ENCODE measurements at regions of chr1 and their contacts with region 1.

Region 1: DNA sequence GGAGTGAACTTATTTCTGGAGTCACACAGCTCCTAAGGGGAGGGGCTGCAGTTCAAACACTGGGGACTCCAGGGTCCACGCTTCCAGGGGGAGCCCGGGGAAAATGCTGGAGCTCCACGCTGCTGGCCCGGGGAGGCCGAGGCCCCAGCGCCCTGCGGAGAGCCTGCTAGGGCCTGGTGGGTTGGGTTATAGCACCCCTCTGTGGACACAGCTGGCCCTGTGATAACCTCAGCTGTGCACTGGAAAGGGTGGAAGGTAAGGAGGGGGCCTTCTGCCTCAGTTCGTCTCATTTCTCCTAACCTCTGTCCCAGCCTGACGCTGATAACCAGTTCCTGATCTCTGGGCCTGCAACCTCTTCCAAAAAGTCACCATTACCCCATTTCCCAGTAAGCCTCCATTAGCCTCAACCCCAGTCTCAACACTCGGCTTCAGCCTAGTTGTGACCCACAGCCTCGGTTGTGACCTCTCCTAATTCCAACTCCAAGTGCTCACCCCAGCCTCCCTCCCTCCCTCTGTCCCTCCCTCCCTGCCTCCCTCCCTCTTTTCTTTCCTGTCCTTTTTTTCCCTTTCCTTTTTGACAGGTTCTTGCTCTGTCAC is 7.1 kb downstream of the NBL1 start:
- DNase-seq: peak; percentile 68
- ATAC-seq: peak; percentile 69
- H3K4me3 Mint-ChIP-seq: no peak overlapping the region
- H3K27ac Mint-ChIP-seq: no peak overlapping the region
- H3K4me1 Mint-ChIP-seq: peaks cover 25% of the 10 kb centered on the region
- H3K27me3 Mint-ChIP-seq: no peaks in the 10 kb centered on the region
- CTCF ChIP-seq: peak; percentile 52

Region 2: DNA sequence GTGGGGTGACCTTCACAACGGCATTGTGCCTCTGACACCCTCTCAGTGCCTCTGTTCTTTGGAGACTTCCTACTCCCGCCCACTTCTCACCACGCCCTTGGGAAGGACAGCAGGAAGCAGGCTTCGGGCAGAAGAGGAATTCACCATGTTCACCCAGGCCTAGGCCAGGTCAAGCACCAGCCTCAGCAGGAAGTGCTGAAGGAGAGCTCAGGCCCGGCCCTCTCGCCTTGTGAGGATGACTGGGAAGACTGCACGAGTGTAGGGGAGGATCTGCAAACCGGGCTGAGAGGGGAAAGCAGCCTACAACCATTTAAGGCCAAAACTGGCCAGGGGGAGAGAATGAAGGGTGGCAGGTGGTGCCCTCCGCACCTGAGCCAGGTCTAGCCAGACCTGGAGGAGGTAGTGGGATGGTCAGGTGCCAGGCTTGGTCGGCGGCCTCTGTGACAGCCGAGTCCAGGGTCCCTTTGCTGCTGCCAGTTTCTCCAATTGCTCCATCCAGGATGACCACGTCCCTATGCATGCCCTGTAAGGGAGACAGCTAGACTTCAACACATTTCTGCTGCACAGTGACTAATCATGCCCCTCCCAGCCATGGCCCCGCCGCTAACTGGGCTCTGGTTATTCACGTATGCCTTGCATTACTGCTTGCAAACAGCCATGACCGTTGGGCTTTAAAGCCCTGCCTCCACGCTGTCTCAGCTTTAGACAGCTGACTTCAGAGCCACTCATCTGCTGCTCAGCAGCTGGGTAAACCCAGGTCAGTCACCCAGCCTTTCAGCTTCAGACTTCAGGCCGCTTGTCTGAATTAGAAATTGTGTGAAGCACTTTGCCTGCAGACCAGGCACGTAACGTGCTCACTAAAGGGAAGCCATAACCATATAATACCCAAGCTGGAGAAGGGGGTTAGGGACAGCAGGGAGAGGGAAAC is 390.8 kb before region 1 on chr1:
- CTCF ChIA-PET with region 1: interaction called, 9 read pairs
- POLR2A ChIA-PET with region 1: no interaction called
- intact Hi-C with region 1: loop called (anchors 10 kb)
- DNase-seq: no peak
- ATAC-seq: no peak
- H3K4me3 Mint-ChIP-seq: no peak overlapping the region
- H3K27ac Mint-ChIP-seq: no peak overlapping the region
- H3K4me1 Mint-ChIP-seq: peaks cover 17% of the 10 kb centered on the region
- H3K27me3 Mint-ChIP-seq: no peaks in the 10 kb centered on the region
- CTCF ChIP-seq: no peak

Region 3: GRCh38 chr1:19341201-19342072 is 309.8 kb before region 1 on chr1:
- CTCF ChIA-PET with region 1: interaction called, 6 read pairs
- POLR2A ChIA-PET with region 1: no interaction called
- intact Hi-C with region 1: loop called (anchors 10 kb)
- DNase-seq: peak; percentile 88
- ATAC-seq: peak; percentile 86
- H3K4me3 Mint-ChIP-seq: no peak overlapping the region
- H3K27ac Mint-ChIP-seq: peak overlapping the region; percentile 57
- H3K4me1 Mint-ChIP-seq: peaks cover 15% of the 10 kb centered on the region
- H3K27me3 Mint-ChIP-seq: no peaks in the 10 kb centered on the region
- CTCF ChIP-seq: peak; percentile 92

Region 4: GRCh38 chr1:19390901-19391595 is 260.2 kb before region 1 on chr1:
- CTCF ChIA-PET with region 1: interaction called, 10 read pairs
- POLR2A ChIA-PET with region 1: no interaction called
- intact Hi-C with region 1: no loop called
- DNase-seq: peak; percentile 73
- ATAC-seq: peak; percentile 61
- H3K4me3 Mint-ChIP-seq: peak overlapping the region; percentile 61
- H3K27ac Mint-ChIP-seq: peak overlapping the region; percentile 92
- H3K4me1 Mint-ChIP-seq: peaks cover 70% of the 10 kb centered on the region
- H3K27me3 Mint-ChIP-seq: no peaks in the 10 kb centered on the region
- CTCF ChIP-seq: peak; percentile 94

Region 5: DNA sequence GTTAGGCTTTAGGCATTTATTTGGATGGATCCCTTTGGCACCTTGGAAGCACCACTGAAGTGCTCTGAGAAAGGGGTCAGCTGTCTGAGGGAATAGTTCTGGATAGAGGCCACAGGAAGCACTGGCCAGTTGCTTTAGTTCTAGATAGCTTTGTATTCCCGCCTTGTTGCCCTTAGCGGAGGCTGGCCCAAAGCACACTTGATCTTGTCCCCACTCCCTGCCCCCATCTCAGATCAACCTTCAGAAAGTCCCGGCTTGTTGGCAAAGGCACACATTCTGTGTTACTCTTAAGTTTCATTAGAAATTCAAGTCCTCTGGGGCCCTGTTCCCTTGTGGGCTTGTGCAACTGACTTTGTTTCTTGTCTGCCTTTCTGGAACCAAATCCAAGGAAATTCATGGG is 22.4 kb before region 1 on chr1:
- CTCF ChIA-PET with region 1: interaction called, 16 read pairs
- POLR2A ChIA-PET with region 1: no interaction called
- intact Hi-C with region 1: no loop called
- DNase-seq: no peak
- ATAC-seq: no peak
- H3K4me3 Mint-ChIP-seq: no peak overlapping the region
- H3K27ac Mint-ChIP-seq: no peak overlapping the region
- H3K4me1 Mint-ChIP-seq: no peaks in the 10 kb centered on the region
- H3K27me3 Mint-ChIP-seq: no peaks in the 10 kb centered on the region
- CTCF ChIP-seq: no peak